ENCODE measurements at regions of chr6 and their contacts with region 1.

Region 1: GRCh38 chr6:133923938-133924593 is 29.0 kb upstream of the TBPL1 start:
- DNase-seq: peak; percentile 82
- H3K4me3 ChIP-seq: no peak overlapping the region
- H3K27ac ChIP-seq: no peak overlapping the region
- H3K4me1 ChIP-seq: no peaks in the 10 kb centered on the region
- H3K27me3 ChIP-seq: peaks cover 13 to 31% of the 10 kb centered on the region in 2 experiments
- CTCF ChIP-seq: peak; percentile 59 to 60
- POLR2A ChIP-seq: no peak

Region 2: DNA sequence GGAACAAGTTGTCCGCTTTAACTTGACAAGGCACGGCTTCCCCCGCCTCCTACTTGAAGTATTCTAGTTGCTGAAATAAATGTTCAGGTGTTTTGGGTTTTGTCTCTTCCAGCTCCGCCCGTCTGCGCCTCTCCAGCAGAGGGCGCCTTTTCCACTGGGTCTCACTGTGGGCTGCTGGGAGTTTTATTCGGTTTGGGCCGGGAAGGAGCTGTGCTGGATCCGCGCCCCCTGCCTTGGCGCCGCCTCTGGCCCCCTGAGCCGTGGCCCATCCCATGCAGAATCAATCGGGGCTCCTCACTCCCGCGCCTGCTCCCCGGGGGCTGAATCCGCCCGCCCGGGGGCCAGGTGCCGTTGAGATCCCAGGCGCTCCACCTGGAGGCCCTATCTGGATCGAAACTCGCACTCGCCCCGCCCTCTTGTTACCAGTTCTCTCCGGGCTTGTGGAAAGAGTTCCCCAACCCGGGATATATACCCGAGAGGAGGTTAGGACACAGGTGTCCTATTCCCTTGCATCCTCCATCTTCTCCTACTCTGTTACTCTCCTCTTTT is 86.2 kb before region 1 on chr6:
- CTCF ChIA-PET with region 1: interaction called, 50 read pairs
- POLR2A ChIA-PET with region 1: no interaction called
- dilution Hi-C with region 1: no loop called
- intact Hi-C with region 1: no loop called
- DNase-seq: peak; percentile 34
- H3K4me3 ChIP-seq: peak overlapping the region; percentile 7 to 24 (median 19)
- H3K27ac ChIP-seq: no peak overlapping the region
- H3K4me1 ChIP-seq: peaks cover 2% of the 10 kb centered on the region
- H3K27me3 ChIP-seq: peaks cover 2 to 5% of the 10 kb centered on the region in 2 experiments
- CTCF ChIP-seq: peak; percentile 78 to 87
- POLR2A ChIP-seq: no peak

Region 3: DNA sequence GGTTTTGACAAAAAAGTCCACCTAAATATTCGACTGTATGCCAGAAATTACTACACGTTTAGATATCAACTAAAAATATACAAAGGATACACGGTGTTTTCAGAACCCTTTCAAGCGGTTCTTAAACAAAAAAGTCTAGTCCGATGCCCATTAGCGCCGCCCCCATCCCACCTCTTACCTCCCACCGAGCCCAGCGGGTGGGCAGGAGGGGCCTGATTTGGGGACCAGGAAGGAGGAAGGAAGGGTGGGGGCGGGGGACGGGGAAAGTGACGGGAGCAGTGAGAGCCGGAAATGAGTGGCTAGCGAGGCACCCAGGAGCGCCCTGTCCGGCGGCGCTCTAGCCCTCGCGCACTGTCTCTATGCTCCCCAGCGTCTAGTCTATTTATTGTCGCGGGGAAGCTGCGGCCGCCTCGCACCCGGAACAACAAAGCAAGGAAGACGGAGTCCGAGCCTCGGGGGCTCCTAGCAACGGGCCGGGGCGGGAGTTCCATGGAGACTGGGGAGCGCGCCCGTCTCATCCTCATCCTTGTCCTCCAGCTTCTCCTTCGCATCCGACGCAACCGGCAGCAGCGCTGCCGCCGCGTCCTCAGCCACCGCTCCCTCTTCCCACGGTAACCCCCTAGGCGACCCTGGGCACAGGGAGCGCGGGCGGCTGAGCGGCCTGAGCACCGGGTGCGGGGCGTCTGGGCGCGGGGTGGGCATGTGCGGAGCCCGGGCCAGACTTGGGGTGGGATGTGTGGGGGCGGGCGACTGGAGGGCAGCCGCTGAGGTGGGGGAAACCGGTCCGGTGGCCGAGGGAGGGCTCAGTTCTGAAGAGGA is 29.0 kb after region 1 on chr6 and contains the start of gene TBPL1:
- CTCF ChIA-PET with region 1: interaction called, 12 read pairs
- POLR2A ChIA-PET with region 1: no interaction called
- dilution Hi-C with region 1: no loop called
- intact Hi-C with region 1: no loop called
- DNase-seq: peak; percentile 96
- H3K4me3 ChIP-seq: peak within 1 kb of the TSS; percentile 79 to 96 (median 86)
- H3K27ac ChIP-seq: peak within 1 kb of the TSS; percentile 88
- H3K4me1 ChIP-seq: peaks cover 21% of the 10 kb centered on the region
- H3K27me3 ChIP-seq: peaks cover 0 to 7% of the 10 kb centered on the region in 2 experiments
- CTCF ChIP-seq: no peak
- POLR2A ChIP-seq: peak; percentile 74
- total RNA-seq, gene TBPL1: 31.2 and 33.4 TPM in 2 replicates

Region 4: GRCh38 chr6:134058622-134059366 is 134.7 kb after region 1 on chr6:
- CTCF ChIA-PET with region 1: interaction called, 133 read pairs
- POLR2A ChIA-PET with region 1: no interaction called
- dilution Hi-C with region 1: no loop called
- intact Hi-C with region 1: no loop called
- DNase-seq: no peak
- H3K4me3 ChIP-seq: no peak overlapping the region
- H3K27ac ChIP-seq: no peak overlapping the region
- H3K4me1 ChIP-seq: peaks cover 10% of the 10 kb centered on the region
- H3K27me3 ChIP-seq: no peaks in the 10 kb centered on the region
- CTCF ChIP-seq: no peak
- POLR2A ChIP-seq: no peak

Region 5: GRCh38 chr6:134080171-134080795 is 156.2 kb after region 1 on chr6:
- CTCF ChIA-PET with region 1: interaction called, 25 read pairs
- POLR2A ChIA-PET with region 1: no interaction called
- dilution Hi-C with region 1: no loop called
- intact Hi-C with region 1: no loop called
- DNase-seq: no peak
- H3K4me3 ChIP-seq: no peak overlapping the region
- H3K27ac ChIP-seq: no peak overlapping the region
- H3K4me1 ChIP-seq: peaks cover 10% of the 10 kb centered on the region
- H3K27me3 ChIP-seq: peaks cover 3 to 14% of the 10 kb centered on the region in 2 experiments
- CTCF ChIP-seq: no peak
- POLR2A ChIP-seq: no peak

Region 6: GRCh38 chr6:134174672-134175198 is 250.7 kb after region 1 on chr6:
- CTCF ChIA-PET with region 1: no interaction called
- POLR2A ChIA-PET with region 1: no interaction called
- dilution Hi-C with region 1: no loop called
- intact Hi-C with region 1: no loop called
- DNase-seq: peak; percentile 90
- H3K4me3 ChIP-seq: peak overlapping the region; percentile 85 to 100 (median 98)
- H3K27ac ChIP-seq: peak overlapping the region; percentile 98
- H3K4me1 ChIP-seq: peaks cover 59% of the 10 kb centered on the region
- H3K27me3 ChIP-seq: no peaks in the 10 kb centered on the region
- CTCF ChIP-seq: no peak
- POLR2A ChIP-seq: peak; percentile 100